ENCODE measurements at regions of chr17 and their contacts with region 1.

Region 1: GRCh38 chr17:18033442-18034099 is 5.4 kb downstream of the ATPAF2 start:
- DNase-seq: peak; percentile 74
- H3K4me3 ChIP-seq: no peak overlapping the region
- H3K27ac ChIP-seq: no peak overlapping the region
- H3K4me1 ChIP-seq: peaks cover 25% of the 10 kb centered on the region
- H3K27me3 ChIP-seq: no peaks in the 10 kb centered on the region
- CTCF ChIP-seq: peak; percentile 55 to 60

Region 2: DNA sequence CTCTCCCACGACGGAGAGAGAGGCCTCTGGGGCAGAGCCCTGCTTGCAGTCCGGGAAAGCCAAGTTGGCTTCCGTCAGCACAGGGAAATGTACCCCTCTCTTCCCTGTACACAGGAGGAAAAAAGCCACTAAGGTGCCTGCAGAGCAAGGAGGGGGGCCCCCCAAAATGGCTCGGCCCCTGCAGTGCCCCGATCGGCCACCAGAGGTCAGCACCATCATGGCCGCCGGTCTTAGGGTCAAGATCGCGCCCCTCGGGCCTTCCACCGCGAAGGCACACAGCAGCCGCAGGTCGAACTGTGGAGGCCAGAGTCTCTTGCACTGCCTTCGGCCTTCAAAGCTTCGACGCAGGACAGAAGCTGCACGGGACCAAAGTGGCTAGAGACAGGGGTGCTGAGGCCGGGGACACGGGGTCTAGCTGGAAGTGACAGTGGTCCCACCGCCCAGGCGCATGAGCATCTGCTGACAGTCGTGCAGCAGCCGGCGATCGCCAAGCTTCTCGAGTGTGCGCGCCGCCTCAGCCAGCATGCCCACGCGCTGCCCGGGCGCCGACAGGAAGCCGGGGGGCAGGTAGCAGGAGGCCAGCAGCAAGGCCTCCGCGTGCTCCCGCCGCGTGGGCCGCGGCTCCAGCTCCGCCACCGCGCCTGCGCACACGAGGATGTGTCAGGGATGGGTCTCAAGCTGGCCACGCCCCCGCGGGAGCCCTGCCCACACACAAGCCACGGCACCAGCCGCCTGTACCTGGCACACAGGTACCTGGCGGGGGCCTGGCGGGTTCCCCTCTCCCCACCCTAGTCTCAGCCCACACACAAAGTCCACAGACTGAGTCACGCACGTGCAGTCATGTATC is 221.1 kb before region 1 on chr17:
- CTCF ChIA-PET with region 1: no interaction called
- dilution Hi-C with region 1: loop called (anchors 5 kb)
- in situ Hi-C with region 1: no loop called
- intact Hi-C with region 1: loop called (anchors 2 kb)
- DNase-seq: peak; percentile 59
- H3K4me3 ChIP-seq: no peak overlapping the region
- H3K27ac ChIP-seq: no peak overlapping the region
- H3K4me1 ChIP-seq: peaks cover 14% of the 10 kb centered on the region
- H3K27me3 ChIP-seq: no peaks in the 10 kb centered on the region
- CTCF ChIP-seq: peak; percentile 81 to 89

Region 3: DNA sequence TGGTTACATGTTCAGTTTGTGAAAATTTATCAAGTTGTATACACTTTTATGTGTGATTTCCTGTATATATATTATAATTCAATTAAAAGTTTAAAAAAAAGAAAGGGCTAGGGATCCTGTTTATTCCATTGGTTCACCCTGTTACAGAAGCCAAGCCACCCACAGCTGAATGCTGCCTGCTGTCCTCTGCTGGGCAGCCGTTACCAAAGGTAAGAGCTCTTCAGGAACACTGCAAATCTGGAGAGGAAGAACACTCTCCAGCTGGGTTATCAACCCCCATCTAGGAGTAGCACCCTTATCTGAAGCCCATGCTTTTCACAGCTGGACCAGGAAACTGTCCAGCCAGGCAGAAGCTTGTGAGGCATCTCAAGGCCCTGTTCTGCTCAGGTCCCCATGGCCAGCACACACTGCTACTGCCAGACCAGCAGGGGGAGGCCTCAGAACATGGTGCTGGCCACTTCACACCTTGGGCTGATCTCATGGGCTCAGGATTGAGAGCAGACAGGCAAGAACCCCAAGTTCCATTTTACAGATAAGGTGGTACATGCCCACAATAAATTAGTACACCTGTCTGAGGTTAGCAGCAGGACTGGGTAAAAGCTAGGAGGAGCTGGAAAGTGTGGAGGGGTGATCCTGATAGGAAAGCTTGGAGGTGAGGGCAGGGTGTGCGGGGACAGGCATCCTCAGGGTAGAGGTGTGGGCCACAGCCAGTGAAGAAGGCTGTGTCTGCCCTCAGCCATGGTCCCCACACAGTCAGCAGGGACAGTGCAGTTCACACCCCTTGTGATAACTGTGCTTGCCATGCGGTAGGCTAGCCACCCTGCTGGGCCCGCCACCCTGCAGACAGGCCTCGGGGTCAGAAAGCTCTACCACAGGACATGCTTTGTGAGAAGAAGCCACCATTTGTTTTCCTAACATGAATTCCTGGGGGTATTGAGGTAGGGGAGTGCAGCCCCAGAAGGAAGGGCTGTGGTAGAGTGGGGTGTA is 142.5 kb before region 1 on chr17:
- CTCF ChIA-PET with region 1: interaction called, 12 read pairs
- dilution Hi-C with region 1: no loop called
- in situ Hi-C with region 1: loop called (anchors 5 kb)
- intact Hi-C with region 1: loop called (anchors 1 kb)
- DNase-seq: peak; percentile 57
- H3K4me3 ChIP-seq: no peak overlapping the region
- H3K27ac ChIP-seq: no peak overlapping the region
- H3K4me1 ChIP-seq: no peaks in the 10 kb centered on the region
- H3K27me3 ChIP-seq: no peaks in the 10 kb centered on the region
- CTCF ChIP-seq: peak; percentile 86 to 95

Region 4: GRCh38 chr17:17959520-17960361 is 73.8 kb before region 1 on chr17:
- CTCF ChIA-PET with region 1: no interaction called
- dilution Hi-C with region 1: no loop called
- in situ Hi-C with region 1: no loop called
- intact Hi-C with region 1: loop called (anchors 2 kb)
- DNase-seq: no peak
- H3K4me3 ChIP-seq: no peak overlapping the region
- H3K27ac ChIP-seq: peak overlapping the region; percentile 97
- H3K4me1 ChIP-seq: peaks cover 32% of the 10 kb centered on the region
- H3K27me3 ChIP-seq: no peaks in the 10 kb centered on the region
- CTCF ChIP-seq: no peak

Region 5: GRCh38 chr17:17994271-17995069 is 39.1 kb before region 1 on chr17:
- CTCF ChIA-PET with region 1: no interaction called
- dilution Hi-C with region 1: loop called (anchors 5 kb)
- in situ Hi-C with region 1: no loop called
- intact Hi-C with region 1: loop called (anchors 1 kb)
- DNase-seq: no peak
- H3K4me3 ChIP-seq: no peak overlapping the region
- H3K27ac ChIP-seq: no peak overlapping the region
- H3K4me1 ChIP-seq: peaks cover 14% of the 10 kb centered on the region
- H3K27me3 ChIP-seq: no peaks in the 10 kb centered on the region
- CTCF ChIP-seq: peak in 1 of 2 donors; percentile 14

Region 6: GRCh38 chr17:18141210-18141803 is 107.7 kb after region 1 on chr17:
- CTCF ChIA-PET with region 1: no interaction called
- dilution Hi-C with region 1: no loop called
- in situ Hi-C with region 1: no loop called
- intact Hi-C with region 1: no loop called
- DNase-seq: peak; percentile 43
- H3K4me3 ChIP-seq: no peak overlapping the region
- H3K27ac ChIP-seq: no peak overlapping the region
- H3K4me1 ChIP-seq: no peaks in the 10 kb centered on the region
- H3K27me3 ChIP-seq: no peaks in the 10 kb centered on the region
- CTCF ChIP-seq: peak; percentile 47 to 51